Colonic mucosa (tissue), 4 donors: ENCODE measurements at regions of chr9 and their contacts with region 1.

Region 1: GRCh38 chr9:15306757-15307534 is at the start of gene TTC39B:
- DNase-seq: peak; percentile 97
- H3K4me3 ChIP-seq: peak within 1 kb of the TSS; percentile 81
- H3K27ac ChIP-seq: peak within 1 kb of the TSS; percentile 89
- H3K4me1 ChIP-seq: no peaks in the 10 kb centered on the region
- H3K27me3 ChIP-seq: no peaks in the 10 kb centered on the region
- CTCF ChIP-seq: no peak
- total RNA-seq, gene TTC39B: 27.2 to 32.2 TPM

Region 2: GRCh38 chr9:15155826-15156225 is 151.1 kb before region 1 on chr9:
- intact Hi-C with region 1: no loop called
- DNase-seq: no peak
- H3K4me3 ChIP-seq: no peak overlapping the region
- H3K27ac ChIP-seq: no peak overlapping the region
- H3K4me1 ChIP-seq: no peaks in the 10 kb centered on the region
- H3K27me3 ChIP-seq: no peaks in the 10 kb centered on the region
- CTCF ChIP-seq: no peak

Region 3: DNA sequence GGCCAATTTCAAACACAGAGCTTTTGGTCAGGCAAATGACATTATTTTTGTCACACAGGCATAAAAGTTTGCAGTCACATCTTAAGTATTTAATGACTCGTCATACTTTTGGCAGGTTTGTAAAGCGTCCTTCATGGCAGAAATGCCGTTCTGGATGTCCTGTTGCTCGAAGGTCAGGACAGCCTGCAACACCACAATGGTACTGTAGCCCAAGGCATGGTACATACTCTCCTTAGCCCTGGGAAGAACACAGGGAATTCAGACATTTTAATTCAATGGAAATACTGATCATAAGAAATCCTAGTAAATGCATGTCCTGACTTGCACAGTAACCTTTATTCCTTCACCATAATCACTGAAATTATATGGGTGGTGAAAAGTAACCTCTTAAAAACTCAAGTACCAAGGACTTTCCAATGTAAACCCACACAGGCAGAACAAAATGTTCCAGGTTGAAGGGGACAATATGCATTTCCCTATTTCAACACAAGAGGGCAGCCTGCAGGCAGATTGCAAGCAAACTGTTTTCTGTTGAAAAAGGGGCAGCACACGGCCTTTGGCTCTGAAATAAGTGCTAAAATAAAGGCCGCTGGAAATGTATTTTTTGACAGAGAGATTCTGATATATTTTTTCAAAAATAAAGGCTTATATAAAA is 95.7 kb before region 1 on chr9:
- intact Hi-C with region 1: loop called (anchors 5 kb)
- DNase-seq: peak; percentile 82
- H3K4me3 ChIP-seq: no peak overlapping the region
- H3K27ac ChIP-seq: no peak overlapping the region
- H3K4me1 ChIP-seq: no peaks in the 10 kb centered on the region
- H3K27me3 ChIP-seq: no peaks in the 10 kb centered on the region
- CTCF ChIP-seq: peak; percentile 87

Region 4: GRCh38 chr9:15422372-15423230 is 115.7 kb after region 1 on chr9 and contains the start of gene SNAPC3:
- intact Hi-C with region 1: loop called (anchors 5 kb)
- DNase-seq: peak; percentile 97
- H3K4me3 ChIP-seq: peak within 1 kb of the TSS; percentile 98
- H3K27ac ChIP-seq: peak within 1 kb of the TSS; percentile 90
- H3K4me1 ChIP-seq: peaks cover 25% of the 10 kb centered on the region
- H3K27me3 ChIP-seq: no peaks in the 10 kb centered on the region
- CTCF ChIP-seq: no peak
- total RNA-seq, gene SNAPC3: 36.9 to 56.6 TPM